CD14-positive monocyte (primary cell): ENCODE measurements at regions of chr19 and their contacts with region 1.

Region 1: DNA sequence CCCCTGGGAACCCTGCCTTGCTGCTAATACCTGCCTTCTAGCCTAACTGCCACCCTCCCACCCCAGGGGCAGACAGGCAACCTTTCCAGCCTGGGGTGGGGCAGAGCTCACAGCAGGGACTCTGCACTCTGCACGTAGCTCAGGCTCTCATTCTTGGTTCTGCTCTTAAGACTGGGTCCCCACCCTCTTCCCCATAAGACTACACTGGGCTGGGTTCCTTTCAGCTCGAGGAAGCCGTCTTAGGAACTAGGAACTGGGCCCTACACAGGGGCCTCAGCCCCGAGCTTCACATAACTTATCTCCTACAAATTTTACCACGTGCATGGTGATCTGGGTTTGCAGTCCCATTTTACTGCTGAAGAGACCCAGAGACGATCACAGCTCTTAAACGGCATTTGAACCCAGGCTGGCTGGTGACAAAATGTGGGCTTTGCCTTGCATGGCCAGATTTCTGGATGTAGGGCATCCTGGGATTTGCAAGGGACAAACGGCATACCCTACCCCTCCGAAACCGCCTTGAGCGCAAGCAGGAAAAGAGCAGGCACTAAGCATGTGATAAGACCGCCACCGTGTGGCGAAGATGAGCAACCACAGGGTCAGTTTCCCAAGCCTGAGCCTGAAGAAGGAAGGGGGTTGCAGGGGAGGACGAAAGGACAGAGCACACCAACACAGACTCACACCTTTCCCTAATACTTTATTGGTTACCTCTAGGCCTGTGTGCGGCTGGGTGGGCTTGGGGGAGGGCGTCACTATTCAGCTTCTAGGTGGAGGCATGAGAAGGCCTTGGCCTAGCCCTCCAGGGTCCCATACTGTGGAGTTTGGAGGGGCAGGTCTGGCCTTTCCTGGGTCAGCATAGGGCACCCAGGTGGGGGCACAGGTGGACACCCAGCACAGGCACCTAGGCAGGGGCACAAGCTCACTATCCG is 5.1 kb downstream of the JUNB start:
- DNase-seq: peak; percentile 80 to 84 (median 80)
- H3K4me3 ChIP-seq: peak overlapping the region; percentile 6 to 63 (median 31)
- H3K4me3 Mint-ChIP-seq: peak overlapping the region; percentile 79 to 89
- H3K27ac ChIP-seq: peak overlapping the region; percentile 71 to 82
- H3K27ac Mint-ChIP-seq: peak overlapping the region; percentile 93 to 100 (median 96)
- H3K4me1 ChIP-seq: peaks cover 36 to 43% of the 10 kb centered on the region in 2 donors
- H3K4me1 Mint-ChIP-seq: peaks cover 34% of the 10 kb centered on the region
- H3K27me3 ChIP-seq: peaks cover 0 to 15% of the 10 kb centered on the region in 2 donors
- H3K27me3 Mint-ChIP-seq: peaks cover 4 to 16% (median 11%) of the 10 kb centered on the region in 3 donors
- CTCF ChIP-seq: peak; percentile 95

Region 2: DNA sequence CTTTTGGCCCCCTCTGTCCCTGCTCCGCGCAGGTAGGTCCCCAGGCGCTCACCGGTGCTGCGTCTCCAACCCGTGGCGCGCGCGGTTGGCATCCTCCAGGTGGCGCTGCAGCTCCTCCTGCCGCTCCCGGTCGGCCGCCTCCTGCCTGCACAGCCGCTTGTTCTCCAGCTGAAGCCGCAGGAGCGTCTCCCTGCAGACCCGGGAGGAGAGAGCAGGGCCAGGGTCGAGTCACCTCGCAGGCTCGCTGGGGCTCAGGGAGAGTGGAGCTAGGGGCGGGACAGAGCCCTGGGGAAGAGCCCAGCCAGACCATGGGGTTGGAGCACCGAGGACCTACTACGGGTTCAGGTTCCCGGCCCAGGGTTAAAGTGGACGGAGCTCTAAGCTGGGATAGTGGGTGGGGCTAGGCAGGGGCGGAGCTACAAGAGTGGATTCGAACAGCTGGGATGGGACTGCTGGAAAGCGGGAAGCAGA is 30.3 kb before region 1 on chr19:
- intact Hi-C with region 1: loop called (anchors 2 to 5 kb)
- DNase-seq: peak; percentile 71 to 83 (median 74)
- H3K4me3 ChIP-seq: peak overlapping the region; percentile 7 to 81 (median 39)
- H3K4me3 Mint-ChIP-seq: peak overlapping the region in 1 of 2 donors; percentile 78
- H3K27ac ChIP-seq: no peak overlapping the region
- H3K27ac Mint-ChIP-seq: peak overlapping the region in 2 of 7 donors; percentile 30 to 70
- H3K4me1 ChIP-seq: peaks cover 0 to 6% of the 10 kb centered on the region in 2 donors
- H3K4me1 Mint-ChIP-seq: peaks cover 8% of the 10 kb centered on the region
- H3K27me3 ChIP-seq: no peaks in the 10 kb centered on the region
- H3K27me3 Mint-ChIP-seq: peaks cover 0 to 2% (median 0%) of the 10 kb centered on the region in 3 donors
- CTCF ChIP-seq: peak; percentile 96

Region 3: GRCh38 chr19:12777217-12778016 is 19.0 kb before region 1 on chr19:
- intact Hi-C with region 1: loop called (anchors 1 to 2 kb)
- DNase-seq: peak; percentile 73 to 83 (median 80)
- H3K4me3 ChIP-seq: peak overlapping the region; percentile 76 to 83 (median 82)
- H3K4me3 Mint-ChIP-seq: peak overlapping the region; percentile 87 to 93
- H3K27ac ChIP-seq: peak overlapping the region; percentile 84 to 94
- H3K27ac Mint-ChIP-seq: peak overlapping the region; percentile 93 to 97 (median 96)
- H3K4me1 ChIP-seq: peaks cover 50 to 62% of the 10 kb centered on the region in 2 donors
- H3K4me1 Mint-ChIP-seq: peaks cover 45% of the 10 kb centered on the region
- H3K27me3 ChIP-seq: no peaks in the 10 kb centered on the region
- H3K27me3 Mint-ChIP-seq: peaks cover 3 to 7% (median 5%) of the 10 kb centered on the region in 3 donors
- CTCF ChIP-seq: peak; percentile 99

Region 4: DNA sequence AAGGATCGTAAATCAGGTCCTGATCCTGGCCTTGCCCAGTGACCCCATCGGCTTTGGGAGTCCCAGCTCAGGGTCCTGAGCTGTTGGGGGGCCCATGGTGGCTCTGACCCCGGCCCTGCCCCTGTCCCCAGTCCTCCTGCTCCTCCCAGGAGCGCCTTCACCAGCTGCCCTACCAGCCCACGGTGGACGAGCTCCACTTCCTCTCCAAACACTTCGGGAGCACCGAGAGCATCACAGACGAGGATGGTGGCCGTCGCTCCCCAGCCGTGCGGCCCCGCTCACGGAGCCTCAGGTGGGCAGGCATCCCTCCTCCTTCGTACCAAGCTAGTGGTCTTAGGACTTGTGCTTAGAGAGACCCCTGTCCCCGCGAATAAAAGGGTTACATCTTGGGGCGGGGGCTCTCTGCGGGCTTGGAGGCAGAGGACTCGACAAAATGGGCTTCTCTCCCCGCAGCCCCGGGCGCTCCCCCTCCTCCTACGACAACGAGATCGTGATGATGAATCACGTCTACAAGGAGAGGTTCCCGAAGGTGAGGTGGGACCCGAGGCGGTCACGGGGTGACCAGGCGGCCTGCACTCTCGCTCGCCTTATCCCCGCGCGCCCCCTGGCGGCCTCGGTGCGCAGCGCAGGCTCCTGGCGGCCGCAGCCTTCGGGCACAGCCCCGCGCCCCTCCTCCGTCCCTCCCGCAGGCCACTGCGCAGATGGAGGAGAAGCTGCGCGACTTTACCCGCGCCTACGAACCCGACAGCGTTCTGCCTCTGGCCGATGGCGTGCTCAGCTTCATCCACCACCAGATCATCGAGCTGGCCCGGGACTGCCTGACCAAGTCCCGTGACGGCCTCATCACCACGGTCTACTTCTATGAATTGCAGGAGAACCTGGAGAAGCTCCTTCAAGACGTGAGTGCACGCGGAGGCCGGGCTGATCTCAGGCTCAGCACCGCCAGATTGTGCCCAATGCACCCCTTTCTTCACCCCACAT is 51.0 kb after region 1 on chr19:
- intact Hi-C with region 1: loop called (anchors 2 to 5 kb)
- DNase-seq: peak; percentile 84 to 94 (median 86)
- H3K4me3 ChIP-seq: peak overlapping the region in 1 of 3 experiments; percentile 42
- H3K4me3 Mint-ChIP-seq: peak overlapping the region; percentile 45 to 81
- H3K27ac ChIP-seq: no peak overlapping the region
- H3K27ac Mint-ChIP-seq: peak overlapping the region in 4 of 7 donors; percentile 13 to 78 (median 55)
- H3K4me1 ChIP-seq: peaks cover 11 to 12% of the 10 kb centered on the region in 2 donors
- H3K4me1 Mint-ChIP-seq: peaks cover 9% of the 10 kb centered on the region
- H3K27me3 ChIP-seq: peaks cover 0 to 25% of the 10 kb centered on the region in 2 donors
- H3K27me3 Mint-ChIP-seq: peaks cover 30 to 53% (median 32%) of the 10 kb centered on the region in 3 donors
- CTCF ChIP-seq: peak; percentile 99

Region 5: GRCh38 chr19:12867120-12868099 is 71.0 kb after region 1 on chr19:
- intact Hi-C with region 1: no loop called
- DNase-seq: peak; percentile 55 to 75 (median 62)
- H3K4me3 ChIP-seq: peak overlapping the region; percentile 40 to 81 (median 44)
- H3K4me3 Mint-ChIP-seq: peak overlapping the region; percentile 65 to 82
- H3K27ac ChIP-seq: no peak overlapping the region
- H3K27ac Mint-ChIP-seq: peak overlapping the region in 2 of 7 donors; percentile 35 to 38
- H3K4me1 ChIP-seq: peaks cover 12 to 13% of the 10 kb centered on the region in 2 donors
- H3K4me1 Mint-ChIP-seq: peaks cover 6% of the 10 kb centered on the region
- H3K27me3 ChIP-seq: peaks cover 0 to 2% of the 10 kb centered on the region in 2 donors
- H3K27me3 Mint-ChIP-seq: peaks cover 2 to 9% (median 9%) of the 10 kb centered on the region in 3 donors
- CTCF ChIP-seq: no peak